IMR-90 (cell line): ENCODE measurements at regions of chr11 and their contacts with region 1.

Region 1: GRCh38 chr11:127308291-127308690 is 307.7 kb upstream of the KIRREL3 start:
- DNase-seq: no peak
- ATAC-seq: no peak
- H3K4me3 ChIP-seq: no peak overlapping the region
- H3K27ac ChIP-seq: no peak overlapping the region
- H3K4me1 ChIP-seq: no peaks in the 10 kb centered on the region
- H3K27me3 ChIP-seq: no peaks in the 10 kb centered on the region
- CTCF ChIP-seq: no peak
- POLR2A ChIP-seq: no peak
- RAD21 ChIP-seq: no peak

Region 2: GRCh38 chr11:126561327-126561893 is 746.9 kb before region 1 on chr11:
- CTCF ChIA-PET with region 1: no interaction called
- POLR2A ChIA-PET with region 1: interaction called, 12 read pairs
- dilution Hi-C with region 1: no loop called
- in situ Hi-C with region 1: no loop called
- intact Hi-C with region 1: no loop called
- DNase-seq: peak; percentile 69
- ATAC-seq: peak; percentile 79
- H3K4me3 ChIP-seq: no peak overlapping the region
- H3K27ac ChIP-seq: no peak overlapping the region
- H3K4me1 ChIP-seq: no peaks in the 10 kb centered on the region
- H3K27me3 ChIP-seq: no peaks in the 10 kb centered on the region
- CTCF ChIP-seq: no peak
- POLR2A ChIP-seq: no peak
- RAD21 ChIP-seq: no peak

Region 3: DNA sequence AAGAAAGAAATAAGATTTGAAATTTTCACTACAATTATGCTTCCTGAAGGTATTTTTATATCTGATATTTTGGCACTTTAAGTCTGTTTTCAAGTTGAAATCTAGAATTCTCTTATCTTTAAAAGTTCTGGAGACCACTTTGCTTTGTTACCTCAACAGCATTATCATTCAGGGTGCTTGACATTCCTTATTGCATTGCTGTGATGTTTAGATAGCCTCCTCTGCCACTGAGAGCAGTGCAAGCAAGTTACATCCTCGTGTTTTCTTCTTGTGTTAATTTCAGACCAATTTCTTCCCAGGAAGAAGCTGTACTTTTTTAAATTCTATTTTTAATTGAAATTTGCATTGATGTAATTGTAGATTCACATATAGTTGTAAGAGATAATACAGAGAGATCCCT is 26.2 kb after region 1 on chr11:
- CTCF ChIA-PET with region 1: no interaction called
- POLR2A ChIA-PET with region 1: no interaction called
- dilution Hi-C with region 1: no loop called
- in situ Hi-C with region 1: no loop called
- intact Hi-C with region 1: no loop called
- DNase-seq: no peak
- ATAC-seq: no peak
- H3K4me3 ChIP-seq: no peak overlapping the region
- H3K27ac ChIP-seq: no peak overlapping the region
- H3K4me1 ChIP-seq: no peaks in the 10 kb centered on the region
- H3K27me3 ChIP-seq: no peaks in the 10 kb centered on the region
- CTCF ChIP-seq: no peak
- POLR2A ChIP-seq: no peak
- RAD21 ChIP-seq: no peak

Region 4: DNA sequence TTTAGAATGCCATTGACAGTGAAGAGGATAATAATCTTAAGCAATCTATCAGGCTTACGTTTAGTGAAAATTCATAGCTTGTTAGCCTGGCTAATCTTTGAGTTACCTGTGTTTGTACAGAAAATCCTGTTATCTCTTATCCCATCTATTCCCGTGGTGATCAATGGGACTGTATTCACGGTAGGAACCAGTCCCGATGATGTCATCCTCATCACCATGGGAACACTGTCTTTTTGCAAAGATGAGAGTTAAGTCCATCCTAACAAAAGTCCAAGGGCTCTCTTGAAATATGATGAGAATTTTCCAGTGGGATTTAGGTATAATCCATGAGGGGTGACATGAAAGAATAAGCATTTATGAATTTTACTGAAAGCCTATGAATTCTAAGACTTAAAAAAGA is 516.9 kb after region 1 on chr11:
- CTCF ChIA-PET with region 1: no interaction called
- POLR2A ChIA-PET with region 1: interaction called, 10 read pairs
- dilution Hi-C with region 1: no loop called
- in situ Hi-C with region 1: no loop called
- intact Hi-C with region 1: no loop called
- DNase-seq: no peak
- ATAC-seq: no peak
- H3K4me3 ChIP-seq: no peak overlapping the region
- H3K27ac ChIP-seq: no peak overlapping the region
- H3K4me1 ChIP-seq: no peaks in the 10 kb centered on the region
- H3K27me3 ChIP-seq: no peaks in the 10 kb centered on the region
- CTCF ChIP-seq: no peak
- POLR2A ChIP-seq: no peak
- RAD21 ChIP-seq: no peak